Activated CD4-positive, alpha-beta T cell treated with anti-CD3 and anti-CD28 coated beads for 36 hours (primary cell): ENCODE measurements at regions of chr9 and their contacts with region 1.

Region 1: GRCh38 chr9:68637020-68637419 is 68.0 kb upstream of the PIP5K1B start:
- DNase-seq: no peak
- ATAC-seq: no peak
- H3K4me3 Mint-ChIP-seq: no peak overlapping the region
- H3K27ac Mint-ChIP-seq: no peak overlapping the region
- H3K4me1 Mint-ChIP-seq: peaks cover 8% of the 10 kb centered on the region
- H3K27me3 Mint-ChIP-seq: peaks cover 7% of the 10 kb centered on the region

Region 2: GRCh38 chr9:68685770-68686169 is 48.8 kb after region 1 on chr9:
- CTCF ChIA-PET with region 1: no interaction called
- POLR2A ChIA-PET with region 1: no interaction called
- intact Hi-C with region 1: loop called in 1 of 2 experiments (anchors 5 kb)
- DNase-seq: peak; percentile 63
- ATAC-seq: peak; percentile 83
- H3K4me3 Mint-ChIP-seq: no peak overlapping the region
- H3K27ac Mint-ChIP-seq: no peak overlapping the region
- H3K4me1 Mint-ChIP-seq: peaks cover 10% of the 10 kb centered on the region
- H3K27me3 Mint-ChIP-seq: peaks cover 21% of the 10 kb centered on the region